ENCODE measurements at regions of chr4 and their contacts with region 1.

Region 1: DNA sequence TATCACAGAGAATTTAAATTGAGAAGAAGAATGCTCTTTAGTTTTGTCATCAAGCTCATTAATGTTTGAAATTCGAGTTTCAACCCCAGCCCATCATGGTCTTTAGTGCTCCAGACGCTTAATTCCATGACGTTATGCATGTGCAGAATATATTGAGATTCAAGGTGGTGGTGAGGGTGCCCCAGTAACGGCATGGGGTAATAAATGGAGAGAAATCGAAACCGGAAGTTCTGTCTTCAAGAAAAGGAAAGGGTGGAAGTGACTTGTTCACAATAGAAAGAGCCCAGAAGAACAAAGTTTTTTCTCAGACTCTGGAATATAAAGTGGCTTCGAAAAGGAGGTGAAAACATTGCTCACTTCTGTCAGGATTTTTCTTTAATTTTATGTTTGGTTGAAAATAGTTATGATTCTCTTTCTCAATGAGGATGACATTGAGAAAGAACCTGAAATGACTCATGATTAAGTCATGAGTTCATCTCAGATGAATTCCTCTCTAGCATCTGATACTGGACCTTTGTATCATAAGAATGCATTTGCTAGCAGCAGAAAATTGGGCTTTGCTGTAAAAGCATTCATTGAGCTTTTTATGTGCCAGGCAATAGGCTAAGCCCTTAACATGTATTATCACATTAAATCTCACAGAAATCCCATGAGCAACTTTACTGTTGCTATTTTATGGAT is 779 bp upstream of the DDX60L start:
- DNase-seq: peak in 1 of 2 donors; percentile 12
- ATAC-seq: peak; percentile 67

Region 2: DNA sequence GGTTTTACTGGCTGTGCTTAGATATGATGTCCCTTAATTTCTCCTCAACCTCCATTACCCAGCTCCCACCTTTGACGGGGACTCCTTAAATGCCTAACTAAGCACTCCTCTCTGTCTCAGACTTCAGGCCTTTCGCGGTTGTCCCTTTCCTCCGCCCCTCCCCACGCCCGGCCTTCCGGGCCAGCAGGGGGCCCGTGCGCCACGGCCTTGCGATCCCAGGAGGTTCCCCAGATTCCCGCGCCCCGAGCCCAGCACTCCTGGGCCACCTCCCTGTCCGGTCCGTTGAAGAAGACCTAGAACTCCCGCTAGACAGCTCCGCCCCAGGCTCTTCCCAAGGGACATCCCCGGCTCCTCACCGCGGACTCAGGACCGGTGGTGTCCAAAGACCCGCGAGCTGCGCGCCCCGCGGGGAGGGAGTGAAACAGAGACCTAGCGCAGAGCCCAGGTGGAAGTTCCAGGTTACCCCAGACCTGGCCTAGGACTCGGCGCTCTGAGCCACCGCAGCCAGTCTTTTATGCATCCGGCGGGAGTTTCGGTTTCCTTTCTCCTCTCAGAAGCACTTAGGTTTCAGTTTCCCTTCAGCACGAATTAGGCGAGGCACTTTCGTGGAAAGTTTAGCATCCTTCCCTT is 162.7 kb before region 1 on chr4 and contains the start of gene DDX60:
- intact Hi-C with region 1: loop called in 1 of 2 experiments (anchors 5 kb)
- DNase-seq: peak; percentile 86 to 87
- ATAC-seq: peak; percentile 88
- total RNA-seq, gene DDX60: 76.1 to 98.5 TPM

Region 3: DNA sequence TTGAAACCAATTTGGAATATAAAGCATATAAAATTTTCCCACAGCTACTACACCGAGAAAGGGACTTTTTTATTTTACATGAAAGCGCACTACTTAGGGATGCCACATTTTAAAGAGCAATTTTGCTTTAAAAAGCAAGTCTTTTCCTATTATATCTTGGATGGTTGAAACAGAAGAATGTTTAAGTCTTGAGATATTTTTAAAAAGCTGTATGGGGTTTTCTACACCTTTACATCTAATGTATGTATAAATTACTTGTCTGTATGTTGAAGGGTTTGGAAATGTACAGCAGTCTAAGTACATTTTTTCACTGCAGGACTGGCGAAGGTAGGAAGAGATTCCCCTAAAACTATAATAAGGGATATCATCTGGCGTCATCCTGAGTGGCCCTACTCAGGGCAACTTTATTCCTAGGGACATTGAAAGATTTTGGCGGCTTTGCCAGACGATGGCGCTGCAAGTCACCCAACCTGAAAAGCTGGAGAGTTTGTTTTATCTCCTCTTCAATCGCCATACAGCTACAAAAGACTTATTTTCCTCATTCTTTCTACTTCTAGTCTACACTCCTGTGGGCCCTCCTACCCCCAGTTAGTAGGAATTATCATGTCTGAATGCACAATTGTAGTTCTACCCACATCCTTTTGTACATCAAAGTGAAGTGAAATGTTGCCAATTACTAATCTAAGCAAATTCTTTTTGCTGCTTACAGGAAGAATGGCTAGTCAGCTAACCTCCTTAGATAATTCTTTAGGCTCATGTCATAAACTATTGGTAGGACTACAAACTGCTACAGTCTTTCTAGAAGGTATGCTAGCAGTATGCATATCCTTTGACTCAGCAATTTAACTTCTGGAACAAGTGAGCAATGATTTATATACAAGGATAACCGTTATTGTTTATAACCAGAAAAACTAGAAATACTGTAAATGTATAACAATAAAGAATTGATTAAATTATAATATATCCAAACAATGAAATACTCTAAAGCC is 1132.1 kb after region 1 on chr4:
- intact Hi-C with region 1: no loop called
- DNase-seq: peak; percentile 72 to 80
- ATAC-seq: peak; percentile 57